AG04449 (cell line): ENCODE measurements at regions of chr17 and their contacts with region 1.

Region 1: GRCh38 chr17:5468075-5468473 is 708 bp downstream of the DHX33 start:
- DNase-seq: no peak
- H3K4me3 ChIP-seq: peak overlapping the region; percentile 90
- CTCF ChIP-seq: no peak

Region 2: DNA sequence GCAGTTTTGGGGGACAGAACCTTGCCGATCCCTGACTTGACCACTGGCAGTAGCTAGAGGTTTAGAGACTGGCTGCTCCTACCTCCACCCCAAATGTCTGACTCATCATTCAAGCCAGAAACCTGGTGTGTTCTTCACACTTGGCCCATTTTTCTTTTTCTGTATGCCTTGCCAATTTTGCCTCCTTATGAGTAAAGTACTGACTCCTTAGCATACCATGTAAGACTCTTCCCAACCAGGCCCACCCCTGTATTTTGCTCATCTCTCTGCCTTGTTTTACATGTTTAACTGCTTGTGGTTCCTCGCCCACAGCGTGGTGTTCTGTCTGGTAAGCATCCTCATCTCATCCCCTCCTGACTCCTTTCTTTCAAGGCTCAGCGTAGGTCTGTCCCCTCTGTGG is 86.5 kb before region 1 on chr17:
- CTCF ChIA-PET with region 1: no interaction called
- POLR2A ChIA-PET with region 1: no interaction called
- DNase-seq: no peak
- H3K4me3 ChIP-seq: no peak overlapping the region
- CTCF ChIP-seq: no peak

Region 3: GRCh38 chr17:5485270-5486203 is 17.5 kb after region 1 on chr17 and contains the start of gene DERL2:
- CTCF ChIA-PET with region 1: interaction called, 11 read pairs
- POLR2A ChIA-PET with region 1: interaction called, 5 read pairs
- DNase-seq: no peak
- H3K4me3 ChIP-seq: peak within 1 kb of the TSS; percentile 86
- CTCF ChIP-seq: no peak

Region 4: GRCh38 chr17:5500589-5501391 is 32.7 kb after region 1 on chr17:
- CTCF ChIA-PET with region 1: no interaction called
- POLR2A ChIA-PET with region 1: no interaction called
- DNase-seq: no peak
- H3K4me3 ChIP-seq: peak overlapping the region; percentile 77
- CTCF ChIP-seq: no peak

Region 5: DNA sequence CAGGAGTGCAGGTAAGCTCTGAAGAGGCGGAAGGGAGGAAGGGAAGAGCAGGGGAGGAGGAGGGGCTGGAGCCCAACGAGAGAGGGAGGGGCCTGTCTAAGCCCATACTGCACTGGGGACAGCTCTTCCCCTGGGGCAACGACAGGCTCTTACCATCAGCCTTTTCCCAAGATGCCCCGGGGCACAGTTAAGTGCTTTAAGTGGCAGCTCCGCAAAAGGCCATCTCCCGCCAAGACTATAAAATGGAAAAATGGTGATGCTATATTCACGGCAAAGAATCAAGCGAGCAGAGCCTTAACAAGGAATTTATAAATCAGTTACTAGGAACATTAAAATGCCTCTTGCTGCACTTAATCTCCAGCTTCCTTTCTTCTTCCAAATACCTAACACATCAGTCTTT is 226.5 kb after region 1 on chr17:
- CTCF ChIA-PET with region 1: no interaction called
- POLR2A ChIA-PET with region 1: no interaction called
- DNase-seq: no peak
- H3K4me3 ChIP-seq: no peak overlapping the region
- CTCF ChIP-seq: no peak